ENCODE measurements at regions of chr22 and their contacts with region 1.

Region 1: DNA sequence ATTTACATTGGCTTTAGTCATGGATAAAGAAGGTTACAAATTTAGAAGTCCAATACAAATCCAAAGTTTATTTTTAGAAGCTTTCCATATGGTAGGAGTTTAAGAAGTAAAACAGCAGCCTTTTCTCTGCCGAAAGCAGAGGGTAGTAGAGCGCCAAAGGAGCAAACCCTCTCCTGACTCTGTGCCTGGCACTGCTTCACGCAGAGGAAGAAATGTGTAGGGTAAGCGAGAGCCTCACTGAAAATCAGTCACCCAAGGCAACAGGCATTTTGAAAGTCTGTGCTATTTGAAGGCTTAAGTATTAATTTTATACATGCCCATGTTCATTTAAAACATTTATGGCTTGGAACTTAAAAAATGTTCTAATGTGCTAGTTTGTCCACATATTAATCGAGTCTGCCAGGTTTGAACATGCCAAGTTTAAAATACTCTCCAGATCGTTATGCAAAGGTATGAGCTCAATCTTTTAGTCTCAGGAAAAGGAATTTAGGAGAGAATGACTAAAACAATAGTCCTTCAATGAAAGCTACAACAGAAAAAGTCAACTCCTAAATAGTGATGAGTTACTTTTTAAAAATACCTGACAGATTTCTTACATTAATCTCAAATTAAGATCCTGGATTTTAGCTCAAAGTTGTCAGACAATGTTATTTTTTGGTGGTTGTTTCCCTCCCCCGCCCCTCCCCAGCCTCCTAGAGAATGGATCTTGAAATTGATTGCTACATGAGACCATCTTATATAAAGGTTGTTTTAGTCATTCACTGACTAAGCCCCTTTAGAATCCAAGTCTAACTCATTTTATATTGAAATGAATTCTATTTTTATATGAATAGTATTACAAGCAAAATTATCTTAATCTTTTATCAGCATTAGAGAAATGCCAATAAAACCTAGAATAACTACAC is 38.7 kb downstream of the MRTFA start:
- DNase-seq: no peak
- ATAC-seq: no peak
- H3K4me3 Mint-ChIP-seq: no peak overlapping the region
- H3K27ac Mint-ChIP-seq: no peak overlapping the region
- H3K4me1 Mint-ChIP-seq: peaks cover 54% of the 10 kb centered on the region
- H3K27me3 Mint-ChIP-seq: no peaks in the 10 kb centered on the region

Region 2: DNA sequence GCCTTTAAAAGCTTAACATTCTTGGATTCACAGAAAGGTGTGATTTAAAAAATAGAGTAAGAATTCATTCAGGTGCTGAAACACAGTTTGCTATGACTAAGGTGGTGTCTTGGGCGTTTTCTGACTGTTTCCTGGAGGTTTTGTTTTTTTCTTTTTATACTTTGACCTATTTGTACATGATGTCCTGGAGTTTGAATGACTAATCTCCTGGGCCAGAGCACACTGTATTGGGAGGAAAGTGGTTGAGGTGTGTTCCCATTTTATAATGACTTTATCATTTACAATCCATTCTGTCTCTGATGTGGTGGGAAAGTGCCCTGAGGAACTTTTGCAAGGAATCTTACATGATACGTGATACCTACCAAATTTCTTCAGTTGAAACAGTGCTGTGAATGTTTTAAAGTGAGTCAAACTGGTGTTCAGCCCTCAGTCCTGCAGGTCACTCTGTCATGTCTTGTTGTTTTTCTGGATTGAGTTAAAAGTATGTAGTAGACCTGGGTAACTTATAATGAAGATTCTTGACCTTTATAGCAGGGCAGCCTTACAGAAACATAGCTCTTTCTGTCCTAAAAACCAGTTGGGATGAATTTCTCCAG is 339.2 kb before region 1 on chr22:
- CTCF ChIA-PET with region 1: no interaction called
- POLR2A ChIA-PET with region 1: no interaction called
- intact Hi-C with region 1: no loop called
- DNase-seq: no peak
- ATAC-seq: peak; percentile 92
- H3K4me3 Mint-ChIP-seq: peak overlapping the region; percentile 1
- H3K27ac Mint-ChIP-seq: peak overlapping the region; percentile 75
- H3K4me1 Mint-ChIP-seq: peaks cover 60% of the 10 kb centered on the region
- H3K27me3 Mint-ChIP-seq: no peaks in the 10 kb centered on the region

Region 3: GRCh38 chr22:40418366-40419201 is 179.2 kb before region 1 on chr22:
- CTCF ChIA-PET with region 1: no interaction called
- POLR2A ChIA-PET with region 1: no interaction called
- intact Hi-C with region 1: no loop called
- DNase-seq: no peak
- ATAC-seq: no peak
- H3K4me3 Mint-ChIP-seq: no peak overlapping the region
- H3K27ac Mint-ChIP-seq: no peak overlapping the region
- H3K4me1 Mint-ChIP-seq: peaks cover 16% of the 10 kb centered on the region
- H3K27me3 Mint-ChIP-seq: no peaks in the 10 kb centered on the region

Region 4: GRCh38 chr22:40541300-40541699 is 56.5 kb before region 1 on chr22:
- CTCF ChIA-PET with region 1: no interaction called
- POLR2A ChIA-PET with region 1: no interaction called
- intact Hi-C with region 1: loop called in 1 of 2 experiments (anchors 5 kb)
- DNase-seq: peak; percentile 42
- ATAC-seq: peak; percentile 97
- H3K4me3 Mint-ChIP-seq: no peak overlapping the region
- H3K27ac Mint-ChIP-seq: no peak overlapping the region
- H3K4me1 Mint-ChIP-seq: peaks cover 22% of the 10 kb centered on the region
- H3K27me3 Mint-ChIP-seq: no peaks in the 10 kb centered on the region